Cardiac septum (tissue), 1 donor: ENCODE measurements at regions of chr14 and their contacts with region 1.

Region 1: DNA sequence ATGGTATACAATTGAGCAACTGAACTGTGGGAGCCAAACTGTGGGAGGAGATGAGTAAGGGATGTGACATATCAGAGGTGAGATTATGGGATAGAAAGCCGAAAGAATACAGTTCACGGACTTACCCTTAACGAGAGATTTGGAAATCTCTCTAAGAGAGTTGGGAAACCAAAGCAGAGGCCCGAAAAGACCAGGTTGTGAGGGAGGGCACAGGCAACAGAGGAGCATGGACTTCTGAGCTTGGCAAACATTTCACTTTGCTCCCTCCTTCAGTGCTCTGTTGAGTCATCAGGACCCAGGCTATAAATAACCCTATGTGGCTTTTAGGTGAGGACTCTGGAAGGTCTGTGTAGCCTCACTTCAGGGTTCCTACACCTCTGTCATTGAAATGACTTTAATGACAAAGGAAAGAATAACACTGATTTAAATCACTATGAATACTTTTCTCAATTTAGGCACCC is 120.6 kb downstream of the TGFB3 start:
- DNase-seq: no peak

Region 2: DNA sequence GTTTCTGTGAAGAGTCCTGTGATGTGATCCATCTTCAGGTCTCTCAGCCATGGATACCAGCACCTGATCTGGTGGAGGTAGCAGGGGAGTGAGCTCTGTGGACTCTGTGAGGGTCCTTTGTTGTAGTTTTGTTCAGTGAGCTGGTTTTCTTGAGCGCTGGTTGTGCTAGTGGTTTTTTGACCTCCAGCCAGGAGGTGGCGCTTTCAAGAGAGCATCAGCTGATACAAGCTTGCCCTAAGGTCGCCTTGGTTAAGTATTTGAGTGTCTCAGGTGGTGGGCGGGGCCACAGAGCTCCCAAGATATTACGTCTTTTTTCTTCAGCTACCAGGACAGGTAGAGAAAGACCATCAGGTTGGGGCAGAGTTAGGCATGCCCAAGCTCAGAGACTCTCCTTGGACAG is 60.4 kb before region 1 on chr14:
- intact Hi-C with region 1: loop called (anchors 10 kb)
- DNase-seq: no peak

Region 3: GRCh38 chr14:75822522-75823141 is 38.6 kb before region 1 on chr14:
- intact Hi-C with region 1: loop called (anchors 5 kb)
- DNase-seq: no peak